IMR-90 (cell line): ENCODE measurements at regions of chr6 and their contacts with region 1.

Region 1: GRCh38 chr6:34757687-34758274 is 476 bp downstream of the SNRPC start:
- DNase-seq: no peak
- ATAC-seq: no peak
- H3K4me3 ChIP-seq: peak overlapping the region; percentile 71
- H3K27ac ChIP-seq: peak overlapping the region; percentile 84
- H3K4me1 ChIP-seq: no peaks in the 10 kb centered on the region
- H3K27me3 ChIP-seq: no peaks in the 10 kb centered on the region
- CTCF ChIP-seq: no peak
- POLR2A ChIP-seq: no peak; the same call in 1 of the 2 replicates
- RAD21 ChIP-seq: no peak

Region 2: DNA sequence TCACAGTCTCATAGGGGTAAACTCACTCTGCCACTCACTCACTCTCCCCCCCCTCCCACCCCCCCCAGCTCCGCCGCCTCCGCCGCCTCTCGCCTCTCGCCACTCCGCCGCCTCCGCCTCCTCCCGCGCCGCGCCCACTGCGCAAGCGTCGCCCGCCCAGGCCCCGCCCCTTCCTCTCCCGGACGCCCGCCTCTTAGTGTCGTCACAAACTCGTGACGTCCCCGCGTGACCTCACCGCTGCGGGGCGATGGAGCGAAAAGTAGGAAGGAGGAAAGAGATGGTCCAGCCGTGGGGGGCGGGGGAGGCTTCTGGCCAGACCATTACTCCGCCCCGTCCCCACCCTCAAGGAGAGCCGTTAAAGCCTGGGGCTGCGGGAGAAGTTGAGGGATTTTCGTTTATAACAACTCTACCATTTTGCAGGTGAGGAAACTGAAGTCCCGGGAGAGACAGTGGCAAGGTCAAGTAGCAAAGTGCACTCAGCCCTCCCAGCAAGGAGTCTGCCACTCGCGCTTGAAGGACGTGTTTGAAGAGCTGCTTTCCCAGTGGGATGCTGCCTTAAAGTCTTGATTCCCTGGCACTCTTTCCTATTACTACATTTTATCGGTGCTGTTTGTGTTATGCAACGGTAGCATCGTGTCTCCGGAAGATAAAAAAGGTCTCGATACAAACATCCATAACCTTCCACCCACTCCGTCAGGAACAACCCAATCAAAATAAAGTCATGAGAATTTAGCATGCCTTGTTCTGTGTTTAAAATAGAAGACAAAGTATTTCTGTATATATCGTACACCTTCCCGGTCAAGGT is 60.8 kb before region 1 on chr6 and contains the start of gene ILRUN:
- CTCF ChIA-PET with region 1: no interaction called
- POLR2A ChIA-PET with region 1: no interaction called
- dilution Hi-C with region 1: no loop called
- in situ Hi-C with region 1: no loop called
- intact Hi-C with region 1: loop called (anchors 2 kb)
- DNase-seq: peak; percentile 92
- ATAC-seq: peak; percentile 97
- H3K4me3 ChIP-seq: peak within 1 kb of the TSS; percentile 89
- H3K27ac ChIP-seq: peak within 1 kb of the TSS; percentile 95
- H3K4me1 ChIP-seq: peaks cover 4% of the 10 kb centered on the region; the same call in 1 of the 2 replicates
- H3K27me3 ChIP-seq: no peaks in the 10 kb centered on the region
- CTCF ChIP-seq: no peak
- POLR2A ChIP-seq: no peak
- RAD21 ChIP-seq: no peak
- total RNA-seq, gene ILRUN: 29.9 and 32.2 TPM in 2 replicates